ENCODE measurements at regions of chr12 and their contacts with region 1.

Region 1: GRCh38 chr12:65615118-65615517 is 209.2 kb upstream of the HMGA2 start:
- DNase-seq: no peak
- H3K4me3 ChIP-seq: no peak overlapping the region
- H3K27ac ChIP-seq: no peak overlapping the region
- H3K4me1 ChIP-seq: no peaks in the 10 kb centered on the region
- H3K27me3 ChIP-seq: peaks cover 12% of the 10 kb centered on the region
- CTCF ChIP-seq: no peak
- POLR2A ChIP-seq: no peak

Region 2: GRCh38 chr12:65392491-65392890 is 222.6 kb before region 1 on chr12:
- intact Hi-C with region 1: no loop called
- DNase-seq: no peak
- H3K4me3 ChIP-seq: no peak overlapping the region
- H3K27ac ChIP-seq: no peak overlapping the region
- H3K4me1 ChIP-seq: no peaks in the 10 kb centered on the region
- H3K27me3 ChIP-seq: no peaks in the 10 kb centered on the region
- CTCF ChIP-seq: no peak
- POLR2A ChIP-seq: no peak

Region 3: DNA sequence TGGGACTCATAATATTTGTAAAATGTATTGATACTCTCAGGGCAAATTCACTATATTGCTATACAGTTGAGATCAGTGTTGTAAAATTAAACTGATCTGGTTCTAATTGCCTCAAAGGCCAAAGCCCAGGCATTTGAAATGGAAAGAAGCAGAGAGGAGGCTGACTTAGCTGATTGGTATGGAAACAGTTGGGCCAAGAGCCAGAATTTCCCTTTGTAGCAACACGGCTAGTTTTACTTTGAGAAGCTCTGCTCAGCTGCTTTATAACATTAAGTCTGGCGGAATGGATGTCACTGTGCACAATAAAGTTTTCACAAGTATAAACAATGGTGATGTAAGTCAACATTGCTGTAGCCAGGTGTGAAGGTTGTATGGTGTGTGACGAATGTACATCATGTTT is 150.2 kb before region 1 on chr12:
- intact Hi-C with region 1: no loop called
- DNase-seq: no peak
- H3K4me3 ChIP-seq: no peak overlapping the region
- H3K27ac ChIP-seq: no peak overlapping the region
- H3K4me1 ChIP-seq: no peaks in the 10 kb centered on the region
- H3K27me3 ChIP-seq: no peaks in the 10 kb centered on the region
- CTCF ChIP-seq: no peak
- POLR2A ChIP-seq: no peak

Region 4: GRCh38 chr12:65999564-66000280 is 384.6 kb after region 1 on chr12:
- intact Hi-C with region 1: loop called in 1 of 2 experiments (anchors 10 kb)
- DNase-seq: no peak
- H3K4me3 ChIP-seq: no peak overlapping the region
- H3K27ac ChIP-seq: no peak overlapping the region
- H3K4me1 ChIP-seq: no peaks in the 10 kb centered on the region
- H3K27me3 ChIP-seq: no peaks in the 10 kb centered on the region
- CTCF ChIP-seq: no peak
- POLR2A ChIP-seq: no peak

Measured in adrenal gland (tissue), 19 donors.